ENCODE measurements at regions of chr14 and their contacts with region 1.

Region 1: GRCh38 chr14:85040046-85040445 is 489.9 kb upstream of the FLRT2 start:
- DNase-seq: no peak
- ATAC-seq: no peak
- H3K4me3 ChIP-seq: no peak overlapping the region
- H3K27ac ChIP-seq: no peak overlapping the region
- H3K4me1 ChIP-seq: no peaks in the 10 kb centered on the region
- H3K27me3 ChIP-seq: no peaks in the 10 kb centered on the region

Region 2: GRCh38 chr14:85016496-85016895 is 23.6 kb before region 1 on chr14:
- intact Hi-C with region 1: no loop called
- DNase-seq: no peak
- ATAC-seq: no peak
- H3K4me3 ChIP-seq: no peak overlapping the region
- H3K27ac ChIP-seq: no peak overlapping the region
- H3K4me1 ChIP-seq: no peaks in the 10 kb centered on the region
- H3K27me3 ChIP-seq: no peaks in the 10 kb centered on the region

Region 3: GRCh38 chr14:85106506-85106905 is 66.5 kb after region 1 on chr14:
- intact Hi-C with region 1: loop called in 1 of 2 experiments (anchors 2 kb)
- DNase-seq: no peak
- ATAC-seq: no peak
- H3K4me3 ChIP-seq: no peak overlapping the region
- H3K27ac ChIP-seq: no peak overlapping the region
- H3K4me1 ChIP-seq: no peaks in the 10 kb centered on the region
- H3K27me3 ChIP-seq: no peaks in the 10 kb centered on the region

Measured in aorta (tissue), 5 donors.